Lower lobe of right lung (tissue), 2 donors: ENCODE measurements at regions of chr17 and their contacts with region 1.

Region 1: GRCh38 chr17:73710095-73710592 is 65.9 kb upstream of the SDK2 start:
- DNase-seq: no peak
- ATAC-seq: peak; percentile 76 to 79
- H3K4me3 ChIP-seq: no peak overlapping the region
- H3K27ac ChIP-seq: no peak overlapping the region
- H3K4me1 ChIP-seq: no peaks in the 10 kb centered on the region
- H3K27me3 ChIP-seq: peaks cover 5% of the 10 kb centered on the region
- CTCF ChIP-seq: peak; percentile 82

Region 2: GRCh38 chr17:73429440-73430164 is 280.5 kb before region 1 on chr17:
- intact Hi-C with region 1: loop called (anchors 10 kb)
- DNase-seq: peak; percentile 92
- ATAC-seq: peak; percentile 90 to 93
- H3K4me3 ChIP-seq: no peak overlapping the region
- H3K27ac ChIP-seq: no peak overlapping the region
- H3K4me1 ChIP-seq: peaks cover 12% of the 10 kb centered on the region
- H3K27me3 ChIP-seq: no peaks in the 10 kb centered on the region
- CTCF ChIP-seq: peak; percentile 96